Right ventricle myocardium inferior (tissue), 1 donor: ENCODE measurements at regions of chr12 and their contacts with region 1.

Region 1: DNA sequence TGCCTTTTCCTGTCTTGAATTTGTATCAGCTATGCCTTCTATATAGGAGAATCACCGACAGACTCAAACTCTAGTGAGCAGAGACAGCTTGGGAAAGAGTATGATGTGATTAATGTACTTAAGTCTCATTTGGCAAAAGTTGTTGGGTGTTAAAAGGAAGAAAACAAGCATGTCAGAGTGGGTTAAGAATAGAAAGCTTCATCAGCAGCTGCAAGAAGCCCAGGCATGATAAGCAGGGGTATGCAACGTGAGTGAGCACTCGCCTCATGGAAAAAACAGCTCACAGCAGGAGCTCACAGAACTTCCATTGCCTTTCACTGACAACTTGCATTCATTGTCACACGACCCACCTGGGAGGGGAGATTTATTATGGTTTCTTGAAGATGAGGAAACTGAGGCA is 35.9 kb upstream of the WNK1 start:
- DNase-seq: no peak
- ATAC-seq: peak; percentile 38

Region 2: DNA sequence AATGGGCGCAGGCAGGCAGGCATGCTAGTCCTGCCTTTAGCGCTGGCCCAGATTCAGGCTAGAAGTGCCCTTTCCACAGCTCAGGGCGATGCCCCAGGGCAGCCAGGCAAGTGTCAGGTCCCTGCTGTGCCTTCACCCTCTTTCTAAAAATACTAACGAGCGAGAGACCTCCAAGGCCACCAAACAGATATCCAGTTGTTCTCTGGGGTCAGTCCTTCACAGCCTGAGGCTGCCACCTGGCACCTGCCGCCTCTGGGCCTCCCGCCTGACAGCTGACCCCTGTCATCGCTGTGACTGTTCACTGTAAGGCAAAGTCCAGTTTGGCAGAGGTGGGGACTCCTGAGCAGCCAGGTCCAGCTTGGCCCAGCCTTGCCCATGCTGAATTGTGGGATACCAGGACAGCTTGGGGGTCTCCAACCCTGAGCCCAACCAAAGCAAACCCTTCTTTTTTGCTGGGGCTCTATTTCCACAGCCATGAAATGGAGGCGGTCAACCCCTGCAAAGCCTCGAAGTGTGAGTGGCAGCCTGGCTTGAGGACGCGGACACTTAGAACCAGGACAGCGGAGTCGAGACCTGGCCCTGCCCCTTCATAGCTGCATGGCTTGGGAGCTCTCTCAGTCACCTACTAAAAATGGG is 133.2 kb before region 1 on chr12:
- intact Hi-C with region 1: loop called (anchors 5 kb)
- DNase-seq: peak; percentile 74
- ATAC-seq: peak; percentile 94

Region 3: GRCh38 chr12:662566-663292 is 53.8 kb before region 1 on chr12:
- intact Hi-C with region 1: loop called (anchors 5 kb)
- DNase-seq: no peak
- ATAC-seq: peak; percentile 69

Region 4: GRCh38 chr12:774051-774614 is 57.6 kb after region 1 on chr12:
- intact Hi-C with region 1: no loop called
- DNase-seq: no peak
- ATAC-seq: no peak